Gastrocnemius medialis (tissue), 4 donors: ENCODE measurements at regions of chr4 and their contacts with region 1.

Region 1: DNA sequence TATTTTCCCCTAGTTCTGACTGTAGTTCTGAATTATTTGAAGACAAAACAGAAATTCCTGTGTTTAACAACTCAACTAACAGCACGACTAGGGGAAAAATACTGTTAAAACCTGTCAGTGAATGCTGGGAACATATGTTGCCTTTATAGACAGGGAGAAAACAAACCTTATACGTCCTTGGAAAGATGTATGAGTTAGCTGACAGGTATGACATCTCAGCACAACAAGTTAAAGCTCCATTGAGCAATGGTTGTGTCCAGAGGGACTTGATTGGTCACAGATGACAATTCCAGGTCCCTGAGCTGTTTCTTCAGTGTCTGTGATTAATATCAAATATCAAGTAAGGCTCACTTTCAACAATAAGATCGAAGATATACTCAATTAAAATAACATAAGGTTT is 58.2 kb upstream of the DDIT4L start:
- DNase-seq: no peak
- ATAC-seq: peak; percentile 26 to 57
- H3K4me3 ChIP-seq: no peak overlapping the region
- H3K27ac ChIP-seq: peak overlapping the region; percentile 12 to 64 (median 53)
- H3K4me1 ChIP-seq: peaks cover 16 to 30% of the 10 kb centered on the region in 2 donors
- H3K27me3 ChIP-seq: no peaks in the 10 kb centered on the region
- CTCF ChIP-seq: no peak
- POLR2A ChIP-seq: no peak

Region 2: GRCh38 chr4:100208964-100209363 is 39.5 kb before region 1 on chr4:
- in situ Hi-C with region 1: no loop called
- intact Hi-C with region 1: loop called (anchors 1 kb)
- DNase-seq: no peak
- ATAC-seq: no peak
- H3K4me3 ChIP-seq: no peak overlapping the region
- H3K27ac ChIP-seq: no peak overlapping the region
- H3K4me1 ChIP-seq: peaks cover 16 to 23% of the 10 kb centered on the region in 2 donors
- H3K27me3 ChIP-seq: no peaks in the 10 kb centered on the region
- CTCF ChIP-seq: no peak
- POLR2A ChIP-seq: no peak

Region 3: GRCh38 chr4:100288161-100288560 is 39.7 kb after region 1 on chr4:
- in situ Hi-C with region 1: no loop called
- intact Hi-C with region 1: loop called (anchors 5 kb)
- DNase-seq: no peak
- ATAC-seq: no peak
- H3K4me3 ChIP-seq: no peak overlapping the region
- H3K27ac ChIP-seq: peak overlapping the region; percentile 47 to 87 (median 72)
- H3K4me1 ChIP-seq: peaks cover 29 to 65% of the 10 kb centered on the region in 2 donors
- H3K27me3 ChIP-seq: no peaks in the 10 kb centered on the region
- CTCF ChIP-seq: no peak
- POLR2A ChIP-seq: no peak